ENCODE measurements at regions of chr6 and their contacts with region 1.

Region 1: GRCh38 chr6:26031595-26032339 is 55.5 kb upstream of the HFE start:
- DNase-seq: peak; percentile 95 to 96
- H3K4me3 ChIP-seq: peak overlapping the region; percentile 66
- H3K4me3 Mint-ChIP-seq: peak overlapping the region; percentile 87
- H3K27ac Mint-ChIP-seq: peak overlapping the region; percentile 100
- H3K4me1 ChIP-seq: peaks cover 9% of the 10 kb centered on the region
- H3K4me1 Mint-ChIP-seq: peaks cover 51% of the 10 kb centered on the region
- H3K27me3 ChIP-seq: no peaks in the 10 kb centered on the region
- H3K27me3 Mint-ChIP-seq: peaks cover 4% of the 10 kb centered on the region
- CTCF ChIP-seq: no peak

Region 2: GRCh38 chr6:26054857-26055669 is 23.3 kb after region 1 on chr6:
- CTCF ChIA-PET with region 1: interaction called, 5 read pairs
- POLR2A ChIA-PET with region 1: interaction called, 56 read pairs
- intact Hi-C with region 1: loop called (anchors 1 kb)
- DNase-seq: peak; percentile 87 to 90
- H3K4me3 ChIP-seq: peak overlapping the region; percentile 64
- H3K4me3 Mint-ChIP-seq: peak overlapping the region; percentile 83
- H3K27ac Mint-ChIP-seq: peak overlapping the region; percentile 93
- H3K4me1 ChIP-seq: peaks cover 8% of the 10 kb centered on the region
- H3K4me1 Mint-ChIP-seq: peaks cover 6% of the 10 kb centered on the region
- H3K27me3 ChIP-seq: no peaks in the 10 kb centered on the region
- H3K27me3 Mint-ChIP-seq: no peaks in the 10 kb centered on the region
- CTCF ChIP-seq: peak in 1 of 2 experiments; percentile 14

Region 3: GRCh38 chr6:26156076-26156849 is 124.5 kb after region 1 on chr6:
- CTCF ChIA-PET with region 1: no interaction called
- POLR2A ChIA-PET with region 1: interaction called, 29 read pairs
- intact Hi-C with region 1: loop called (anchors 2 kb)
- DNase-seq: peak; percentile 86 to 93
- H3K4me3 ChIP-seq: peak overlapping the region; percentile 64
- H3K4me3 Mint-ChIP-seq: peak overlapping the region; percentile 86
- H3K27ac Mint-ChIP-seq: peak overlapping the region; percentile 98
- H3K4me1 ChIP-seq: peaks cover 10% of the 10 kb centered on the region
- H3K4me1 Mint-ChIP-seq: peaks cover 45% of the 10 kb centered on the region
- H3K27me3 ChIP-seq: no peaks in the 10 kb centered on the region
- H3K27me3 Mint-ChIP-seq: peaks cover 15% of the 10 kb centered on the region
- CTCF ChIP-seq: no peak

Region 4: DNA sequence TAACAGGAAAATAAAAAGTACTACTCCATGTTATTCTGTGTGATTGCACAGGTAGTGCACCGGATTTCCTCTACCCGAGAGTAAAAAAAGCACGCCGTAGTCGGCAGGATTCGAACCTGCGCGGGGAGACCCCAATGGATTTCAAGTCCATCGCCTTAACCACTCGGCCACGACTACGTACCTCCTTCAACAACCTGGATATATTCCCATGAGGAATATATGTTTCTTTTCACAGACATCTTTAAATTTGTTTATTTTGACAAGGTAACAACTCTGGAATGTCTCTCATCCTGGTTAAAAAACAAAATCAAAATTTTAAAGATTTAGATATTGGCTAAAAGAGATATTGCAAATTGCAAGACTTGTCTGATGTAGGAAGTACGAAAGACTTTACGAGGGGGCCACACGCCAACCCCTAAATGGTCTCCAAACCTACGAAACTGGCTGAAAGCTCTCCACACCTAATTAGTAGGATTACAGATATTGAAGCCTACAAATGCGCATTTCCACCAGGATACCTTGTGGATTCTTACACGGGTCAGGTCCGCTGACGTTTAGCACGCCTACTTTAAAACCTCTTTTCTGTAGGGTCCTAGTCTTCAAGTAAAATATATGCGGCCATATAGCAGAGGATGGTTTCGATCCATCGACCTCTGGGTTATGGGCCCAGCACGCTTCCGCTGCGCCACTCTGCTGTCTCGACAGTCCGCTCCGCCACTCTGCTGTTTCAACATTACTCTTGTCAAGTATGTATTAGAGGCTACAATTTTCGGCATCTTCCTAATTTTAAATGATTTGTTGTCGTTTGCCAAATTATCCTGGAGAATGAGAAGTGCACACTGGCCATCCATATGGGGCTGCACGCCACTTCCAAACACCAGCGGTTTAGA is 281.0 kb after region 1 on chr6:
- CTCF ChIA-PET with region 1: no interaction called
- POLR2A ChIA-PET with region 1: interaction called, 11 read pairs
- intact Hi-C with region 1: no loop called
- DNase-seq: peak; percentile 84
- H3K4me3 ChIP-seq: peak overlapping the region; percentile 65
- H3K4me3 Mint-ChIP-seq: peak overlapping the region; percentile 90
- H3K27ac Mint-ChIP-seq: peak overlapping the region; percentile 95
- H3K4me1 ChIP-seq: peaks cover 17% of the 10 kb centered on the region
- H3K4me1 Mint-ChIP-seq: peaks cover 39% of the 10 kb centered on the region
- H3K27me3 ChIP-seq: no peaks in the 10 kb centered on the region
- H3K27me3 Mint-ChIP-seq: no peaks in the 10 kb centered on the region
- CTCF ChIP-seq: no peak

Region 5: DNA sequence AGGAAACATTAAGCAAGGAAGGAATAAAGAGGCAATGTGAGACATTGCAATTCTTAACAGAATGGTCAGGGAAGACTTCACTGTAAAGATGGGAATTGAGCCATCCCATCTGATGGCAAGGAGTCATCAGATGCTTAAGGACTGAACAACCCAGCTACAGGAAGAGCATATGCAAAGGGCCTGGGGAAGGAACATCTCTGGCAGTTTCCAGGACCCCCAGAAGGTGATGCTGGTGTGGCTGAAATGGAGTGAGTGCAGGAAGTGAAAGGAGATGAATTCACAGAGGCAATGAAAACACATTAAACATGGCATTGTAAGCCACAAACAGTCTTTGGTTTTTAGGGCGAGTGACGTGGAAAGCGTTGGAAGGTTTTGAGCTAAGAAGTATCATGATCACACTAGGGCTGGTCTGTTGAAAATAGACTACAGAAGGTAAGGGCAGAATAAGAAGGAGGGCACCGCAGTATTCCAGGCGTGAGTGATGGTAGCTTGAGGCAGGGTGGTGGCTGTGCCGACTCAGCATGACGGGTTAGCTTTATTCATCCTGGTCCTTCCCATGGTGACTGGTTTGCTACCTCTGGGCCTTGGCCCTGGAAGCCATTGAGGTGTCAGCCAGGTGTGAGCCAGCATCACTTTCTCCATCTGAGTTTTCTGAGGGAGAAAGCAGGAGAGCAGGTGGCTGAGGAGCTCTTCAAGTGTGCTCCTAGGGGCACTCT is 432.8 kb after region 1 on chr6:
- CTCF ChIA-PET with region 1: no interaction called
- POLR2A ChIA-PET with region 1: no interaction called
- intact Hi-C with region 1: no loop called
- DNase-seq: no peak
- H3K4me3 ChIP-seq: no peak overlapping the region
- H3K4me3 Mint-ChIP-seq: no peak overlapping the region
- H3K27ac Mint-ChIP-seq: no peak overlapping the region
- H3K4me1 ChIP-seq: no peaks in the 10 kb centered on the region
- H3K4me1 Mint-ChIP-seq: peaks cover under 1% of the 10 kb centered on the region
- H3K27me3 ChIP-seq: no peaks in the 10 kb centered on the region
- H3K27me3 Mint-ChIP-seq: no peaks in the 10 kb centered on the region
- CTCF ChIP-seq: no peak

Measured in Caco-2 (cell line).